CD4-positive, alpha-beta T cell (primary cell): ENCODE measurements at regions of chr4 and their contacts with region 1.

Region 1: DNA sequence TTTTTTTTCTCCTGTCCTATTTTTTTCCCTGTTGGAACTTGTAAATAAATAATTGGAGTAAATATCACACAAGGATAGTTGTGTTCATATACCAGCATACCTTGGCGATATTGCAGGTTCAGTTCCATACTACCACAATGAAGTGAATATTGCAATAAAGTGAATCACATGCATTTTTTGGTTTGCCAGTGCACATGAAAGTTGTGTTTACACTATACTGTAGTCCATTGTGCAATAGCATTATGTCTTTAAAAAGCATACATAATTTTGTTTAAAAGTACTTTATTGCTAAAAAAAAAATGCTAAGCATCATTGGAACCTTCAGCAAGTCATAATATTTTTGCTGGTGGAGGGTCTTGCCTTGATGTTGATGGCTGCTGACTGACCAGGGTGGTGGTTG is 88.6 kb downstream of the GSTCD start:
- DNase-seq: no peak
- ATAC-seq: no peak
- H3K4me3 ChIP-seq: no peak overlapping the region
- H3K4me3 Mint-ChIP-seq: no peak overlapping the region
- H3K27ac ChIP-seq: no peak overlapping the region
- H3K27ac Mint-ChIP-seq: no peak overlapping the region
- H3K4me1 ChIP-seq: no peaks in the 10 kb centered on the region
- H3K4me1 Mint-ChIP-seq: no peaks in the 10 kb centered on the region
- H3K27me3 ChIP-seq: no peaks in the 10 kb centered on the region
- H3K27me3 Mint-ChIP-seq: no peaks in the 10 kb centered on the region
- CTCF ChIP-seq: no peak

Region 2: GRCh38 chr4:105784761-105785160 is 12.5 kb before region 1 on chr4:
- CTCF ChIA-PET with region 1: no interaction called
- POLR2A ChIA-PET with region 1: no interaction called
- intact Hi-C with region 1: loop called (anchors 1 kb)
- DNase-seq: no peak
- ATAC-seq: no peak
- H3K4me3 ChIP-seq: no peak overlapping the region
- H3K4me3 Mint-ChIP-seq: no peak overlapping the region
- H3K27ac ChIP-seq: no peak overlapping the region
- H3K27ac Mint-ChIP-seq: no peak overlapping the region
- H3K4me1 ChIP-seq: no peaks in the 10 kb centered on the region
- H3K4me1 Mint-ChIP-seq: no peaks in the 10 kb centered on the region
- H3K27me3 ChIP-seq: no peaks in the 10 kb centered on the region
- H3K27me3 Mint-ChIP-seq: no peaks in the 10 kb centered on the region
- CTCF ChIP-seq: no peak